Dendritic cell treated with granulocyte-macrophage colony-stimulating factor and Interleukin-4, amounts not matched to agents 40 ng/mL and 50 ng/mL, for 4 days (primary cell): ENCODE measurements at regions of chr12 and their contacts with region 1.

Region 1: GRCh38 chr12:49698619-49699545 is 8.3 kb downstream of the FMNL3 start:
- H3K4me3 Mint-ChIP-seq: peak overlapping the region; percentile 59
- H3K27ac Mint-ChIP-seq: peak overlapping the region; percentile 89
- H3K4me1 Mint-ChIP-seq: peaks cover 68% of the 10 kb centered on the region
- H3K27me3 Mint-ChIP-seq: no peaks in the 10 kb centered on the region

Region 2: GRCh38 chr12:49609746-49610089 is 89.2 kb before region 1 on chr12:
- intact Hi-C with region 1: no loop called
- H3K4me3 Mint-ChIP-seq: no peak overlapping the region
- H3K27ac Mint-ChIP-seq: no peak overlapping the region
- H3K4me1 Mint-ChIP-seq: peaks cover 6% of the 10 kb centered on the region
- H3K27me3 Mint-ChIP-seq: peaks cover 25% of the 10 kb centered on the region

Region 3: GRCh38 chr12:49662998-49663843 is 35.7 kb before region 1 on chr12:
- intact Hi-C with region 1: loop called (anchors 5 kb)
- H3K4me3 Mint-ChIP-seq: peak overlapping the region; percentile 44
- H3K27ac Mint-ChIP-seq: peak overlapping the region; percentile 76
- H3K4me1 Mint-ChIP-seq: peaks cover 79% of the 10 kb centered on the region
- H3K27me3 Mint-ChIP-seq: no peaks in the 10 kb centered on the region